B cell (primary cell): ENCODE measurements at regions of chr7 and their contacts with region 1.

Region 1: GRCh38 chr7:105808703-105809590 is 67.5 kb downstream of the ATXN7L1 start:
- DNase-seq: peak; percentile 83
- ATAC-seq: peak; percentile 97
- H3K4me3 ChIP-seq: no peak overlapping the region
- H3K4me3 Mint-ChIP-seq: peak overlapping the region; percentile 30
- H3K27ac ChIP-seq: peak overlapping the region; percentile 38 to 58
- H3K27ac Mint-ChIP-seq: peak overlapping the region; percentile 46
- H3K4me1 ChIP-seq: peaks cover 21 to 41% of the 10 kb centered on the region in 2 donors
- H3K4me1 Mint-ChIP-seq: peaks cover 41% of the 10 kb centered on the region
- H3K27me3 ChIP-seq: no peaks in the 10 kb centered on the region
- H3K27me3 Mint-ChIP-seq: no peaks in the 10 kb centered on the region
- CTCF ChIP-seq: no peak

Region 2: DNA sequence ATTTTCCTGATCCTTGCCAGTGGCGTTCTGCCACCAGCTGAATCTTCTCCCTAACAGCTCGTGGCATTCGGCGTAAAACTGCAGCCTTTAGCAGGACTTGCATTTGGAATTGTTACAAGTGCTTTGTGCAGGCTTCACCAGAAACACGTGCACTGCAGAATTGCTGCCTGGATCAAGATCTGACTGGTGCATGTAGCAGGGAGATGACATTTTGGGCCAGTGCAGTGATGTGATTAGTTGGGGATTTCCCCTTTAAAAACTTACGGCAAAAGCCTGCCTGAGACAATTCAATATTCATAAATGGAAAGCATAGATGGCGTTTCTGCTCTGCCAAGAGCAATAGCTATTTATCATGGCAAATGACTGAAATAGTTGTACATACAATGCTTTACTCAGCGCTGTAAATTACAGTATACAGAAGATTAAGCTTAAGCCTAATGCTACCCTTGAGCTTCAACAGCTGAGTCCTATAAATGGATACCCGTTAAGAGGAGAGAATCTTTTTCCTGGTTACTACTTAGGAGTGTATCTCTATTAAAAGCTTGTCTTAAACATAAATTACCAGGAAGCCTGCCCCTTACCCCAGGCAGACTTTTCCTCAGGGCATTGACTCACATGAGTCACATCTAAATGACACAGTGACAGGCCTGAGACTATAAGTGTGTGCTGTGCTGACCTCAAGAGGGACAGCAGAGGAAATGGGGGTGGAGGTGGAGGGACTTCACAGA is 38.9 kb before region 1 on chr7:
- CTCF ChIA-PET with region 1: interaction called, 4 read pairs
- POLR2A ChIA-PET with region 1: no interaction called
- intact Hi-C with region 1: loop called (anchors 2 kb)
- DNase-seq: peak; percentile 35
- ATAC-seq: peak; percentile 82
- H3K4me3 ChIP-seq: no peak overlapping the region
- H3K4me3 Mint-ChIP-seq: peak overlapping the region; percentile 67
- H3K27ac ChIP-seq: no peak overlapping the region
- H3K27ac Mint-ChIP-seq: no peak overlapping the region
- H3K4me1 ChIP-seq: peaks cover 7 to 18% of the 10 kb centered on the region in 2 donors
- H3K4me1 Mint-ChIP-seq: peaks cover 35% of the 10 kb centered on the region
- H3K27me3 ChIP-seq: peaks cover 0 to 2% (median under 1%) of the 10 kb centered on the region in 4 experiments
- H3K27me3 Mint-ChIP-seq: peaks cover 5% of the 10 kb centered on the region
- CTCF ChIP-seq: no peak

Region 3: DNA sequence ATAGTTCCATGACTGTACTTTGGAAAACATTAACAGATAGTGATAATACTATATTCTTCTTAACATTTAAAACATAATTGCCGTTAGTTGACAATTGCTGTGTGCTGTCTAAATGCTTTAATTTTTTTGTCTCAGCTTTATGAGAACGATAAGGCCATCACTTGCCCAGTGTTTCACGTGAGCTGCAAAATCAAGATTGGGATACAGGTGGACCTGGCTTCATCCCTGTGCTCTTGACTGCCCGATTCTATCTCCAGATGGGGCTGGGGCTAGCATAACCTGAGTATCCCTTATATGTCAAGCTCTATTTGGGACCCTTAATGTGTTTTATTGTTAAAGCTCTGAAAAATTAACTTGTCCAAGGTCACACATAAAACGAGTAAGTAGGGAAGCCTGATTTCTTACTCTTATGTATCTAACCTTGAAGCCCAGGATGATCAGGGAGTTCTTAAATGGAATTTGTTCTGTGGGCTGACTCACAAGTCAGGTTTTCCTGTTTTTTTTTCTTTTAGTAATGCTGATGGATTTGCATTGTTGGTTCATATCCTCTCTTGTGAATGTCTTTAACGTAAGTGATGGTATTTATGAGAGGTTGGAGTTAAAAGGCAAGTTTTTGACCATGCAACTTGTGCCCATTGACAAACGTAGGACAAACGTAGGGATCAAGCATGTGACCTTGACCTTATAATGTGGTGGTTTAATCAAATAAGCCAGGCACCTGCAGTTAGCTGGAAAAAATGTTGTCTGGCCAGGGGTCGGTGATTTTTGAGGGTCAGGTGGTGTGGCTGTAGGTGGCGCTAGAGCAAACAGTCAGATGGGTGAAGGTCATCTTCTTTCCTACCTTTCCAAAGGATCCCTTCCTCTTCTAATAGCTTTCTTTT is 1239.2 kb after region 1 on chr7:
- CTCF ChIA-PET with region 1: no interaction called
- POLR2A ChIA-PET with region 1: no interaction called
- intact Hi-C with region 1: no loop called
- DNase-seq: no peak
- ATAC-seq: no peak
- H3K4me3 ChIP-seq: no peak overlapping the region
- H3K4me3 Mint-ChIP-seq: no peak overlapping the region
- H3K27ac ChIP-seq: no peak overlapping the region
- H3K27ac Mint-ChIP-seq: no peak overlapping the region
- H3K4me1 ChIP-seq: peaks cover 7 to 13% of the 10 kb centered on the region in 2 donors
- H3K4me1 Mint-ChIP-seq: peaks cover 13% of the 10 kb centered on the region
- H3K27me3 ChIP-seq: peaks cover 0 to 26% (median 24%) of the 10 kb centered on the region in 4 experiments
- H3K27me3 Mint-ChIP-seq: peaks cover 37% of the 10 kb centered on the region
- CTCF ChIP-seq: no peak